Activated CD4-positive, alpha-beta memory T cell treated with anti-CD3 and anti-CD28 coated beads, Interleukin-2, amount 10 ng/mL, durations not matched to agents 7 days and 5 days (primary cell): ENCODE measurements at regions of chr6 and their contacts with region 1.

Region 1: DNA sequence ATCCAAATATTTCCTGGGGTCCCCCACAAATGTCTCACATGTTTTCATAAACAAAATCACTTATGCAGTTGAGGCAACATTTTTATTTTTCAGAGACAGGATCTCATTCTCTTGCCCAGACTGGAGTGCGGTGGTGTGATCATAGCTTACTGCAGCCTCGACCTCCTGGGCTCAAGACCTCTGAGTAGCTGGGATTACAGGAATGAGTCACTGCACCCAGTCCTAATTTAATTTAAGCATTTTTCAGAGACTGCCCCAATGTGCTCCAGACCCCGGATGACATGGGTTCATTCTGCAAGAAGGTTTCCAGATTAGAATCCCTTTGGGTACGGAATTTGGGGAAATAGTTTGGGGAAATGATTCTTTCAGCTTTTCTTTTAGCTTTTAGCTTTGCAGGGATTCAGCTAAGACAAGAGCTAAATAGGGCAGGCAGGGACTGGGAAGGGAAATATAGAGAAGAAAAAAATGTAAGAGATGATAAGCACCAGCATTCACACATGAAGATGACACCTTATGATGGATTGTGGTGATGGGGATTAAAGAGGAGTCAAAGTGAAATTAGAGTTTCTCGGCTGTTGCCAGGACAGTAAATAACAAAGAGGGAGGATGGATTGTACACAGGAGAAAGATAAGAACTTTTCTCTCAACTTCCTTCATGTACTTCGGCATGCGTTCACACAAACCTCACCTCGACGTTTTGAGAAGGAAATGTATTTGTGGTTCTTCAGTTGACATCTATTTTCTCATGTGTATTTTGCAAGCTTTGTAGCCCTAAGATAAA is 169.4 kb upstream of the TAB2 start:
- DNase-seq: peak; percentile 50
- H3K4me3 Mint-ChIP-seq: peak overlapping the region; percentile 44
- H3K27ac Mint-ChIP-seq: peak overlapping the region; percentile 91
- H3K4me1 Mint-ChIP-seq: peaks cover 91% of the 10 kb centered on the region
- H3K27me3 Mint-ChIP-seq: no peaks in the 10 kb centered on the region

Region 2: GRCh38 chr6:149082286-149082707 is 65.8 kb before region 1 on chr6:
- CTCF ChIA-PET with region 1: interaction called, 12 read pairs
- POLR2A ChIA-PET with region 1: interaction called, 121 read pairs
- DNase-seq: peak; percentile 91
- H3K4me3 Mint-ChIP-seq: peak overlapping the region; percentile 50
- H3K27ac Mint-ChIP-seq: peak overlapping the region; percentile 96
- H3K4me1 Mint-ChIP-seq: peaks cover 87% of the 10 kb centered on the region
- H3K27me3 Mint-ChIP-seq: no peaks in the 10 kb centered on the region

Region 3: GRCh38 chr6:149129371-149130077 is 18.6 kb before region 1 on chr6:
- CTCF ChIA-PET with region 1: interaction called, 10 read pairs
- POLR2A ChIA-PET with region 1: interaction called, 96 read pairs
- DNase-seq: no peak
- H3K4me3 Mint-ChIP-seq: no peak overlapping the region
- H3K27ac Mint-ChIP-seq: peak overlapping the region; percentile 91
- H3K4me1 Mint-ChIP-seq: peaks cover 8% of the 10 kb centered on the region
- H3K27me3 Mint-ChIP-seq: no peaks in the 10 kb centered on the region

Region 4: GRCh38 chr6:149166747-149167146 is 18.6 kb after region 1 on chr6:
- CTCF ChIA-PET with region 1: no interaction called
- POLR2A ChIA-PET with region 1: interaction called, 21 read pairs
- DNase-seq: no peak
- H3K4me3 Mint-ChIP-seq: no peak overlapping the region
- H3K27ac Mint-ChIP-seq: peak overlapping the region; percentile 28
- H3K4me1 Mint-ChIP-seq: peaks cover 61% of the 10 kb centered on the region
- H3K27me3 Mint-ChIP-seq: no peaks in the 10 kb centered on the region

Region 5: DNA sequence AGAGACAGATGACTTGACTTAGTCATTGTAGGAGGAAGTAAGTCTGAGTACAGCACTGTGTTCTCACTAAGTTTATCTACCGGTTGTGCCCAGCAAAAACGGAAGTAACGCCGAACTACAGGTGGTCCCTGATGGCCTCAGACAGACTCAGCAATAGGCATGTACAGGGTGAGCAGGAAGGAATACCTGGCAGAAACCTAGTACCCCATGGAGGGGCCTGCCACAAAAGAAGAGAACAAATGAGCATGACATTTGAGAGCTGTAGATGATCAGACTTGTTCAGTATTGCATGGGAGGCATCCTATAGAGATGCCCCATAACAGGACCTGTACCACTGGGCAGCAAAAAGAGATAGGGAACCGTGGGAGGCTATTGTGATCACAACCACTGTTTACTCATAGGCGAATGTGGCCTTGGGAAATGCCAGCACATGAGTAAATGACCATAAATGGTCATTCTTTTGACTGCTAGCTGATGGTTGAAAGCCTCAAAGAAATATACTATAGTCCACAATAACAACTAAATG is 63.0 kb after region 1 on chr6:
- CTCF ChIA-PET with region 1: no interaction called
- POLR2A ChIA-PET with region 1: interaction called, 42 read pairs
- DNase-seq: peak; percentile 33
- H3K4me3 Mint-ChIP-seq: peak overlapping the region; percentile 21
- H3K27ac Mint-ChIP-seq: no peak overlapping the region
- H3K4me1 Mint-ChIP-seq: peaks cover 4% of the 10 kb centered on the region
- H3K27me3 Mint-ChIP-seq: no peaks in the 10 kb centered on the region

Region 6: GRCh38 chr6:149324428-149324827 is 176.3 kb after region 1 on chr6:
- CTCF ChIA-PET with region 1: interaction called, 5 read pairs
- POLR2A ChIA-PET with region 1: interaction called, 198 read pairs
- DNase-seq: peak; percentile 38
- H3K4me3 Mint-ChIP-seq: peak overlapping the region; percentile 53
- H3K27ac Mint-ChIP-seq: peak overlapping the region; percentile 64
- H3K4me1 Mint-ChIP-seq: peaks cover 76% of the 10 kb centered on the region
- H3K27me3 Mint-ChIP-seq: no peaks in the 10 kb centered on the region

Region 7: DNA sequence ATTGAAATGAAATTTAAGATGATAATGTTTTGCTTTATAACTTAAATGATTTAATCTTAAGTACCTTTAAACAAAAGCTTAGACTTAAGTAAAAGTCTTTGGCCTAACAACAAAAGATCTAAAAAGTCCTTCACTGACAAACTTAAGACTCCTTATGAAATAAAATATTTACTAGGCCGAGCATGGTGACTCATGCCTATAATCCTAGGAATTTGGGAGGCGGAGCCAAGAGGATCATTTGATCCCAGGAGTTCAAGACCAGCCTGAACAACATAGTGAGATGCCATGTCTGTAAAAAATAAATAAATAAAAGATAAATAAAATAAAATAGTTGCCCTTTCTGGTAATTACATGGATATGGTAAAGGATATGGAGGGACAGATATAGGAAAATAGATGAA is 488.0 kb after region 1 on chr6:
- CTCF ChIA-PET with region 1: no interaction called
- POLR2A ChIA-PET with region 1: no interaction called
- DNase-seq: no peak
- H3K4me3 Mint-ChIP-seq: no peak overlapping the region
- H3K27ac Mint-ChIP-seq: no peak overlapping the region
- H3K4me1 Mint-ChIP-seq: no peaks in the 10 kb centered on the region
- H3K27me3 Mint-ChIP-seq: no peaks in the 10 kb centered on the region